ENCODE measurements at regions of chr1 and their contacts with region 1.

Region 1: GRCh38 chr1:205255941-205256780 is 28.4 kb downstream of the TMCC2 start:
- DNase-seq: peak; percentile 90 to 98 (median 95)
- H3K4me3 ChIP-seq: no peak overlapping the region
- H3K27ac ChIP-seq: peak overlapping the region in 2 of 5 donors; percentile 2 to 10
- H3K4me1 ChIP-seq: peaks cover 9 to 22% of the 10 kb centered on the region in 2 donors
- H3K27me3 ChIP-seq: no peaks in the 10 kb centered on the region
- CTCF ChIP-seq: peak; percentile 96 to 100 (median 99)
- POLR2A ChIP-seq: no peak

Region 2: DNA sequence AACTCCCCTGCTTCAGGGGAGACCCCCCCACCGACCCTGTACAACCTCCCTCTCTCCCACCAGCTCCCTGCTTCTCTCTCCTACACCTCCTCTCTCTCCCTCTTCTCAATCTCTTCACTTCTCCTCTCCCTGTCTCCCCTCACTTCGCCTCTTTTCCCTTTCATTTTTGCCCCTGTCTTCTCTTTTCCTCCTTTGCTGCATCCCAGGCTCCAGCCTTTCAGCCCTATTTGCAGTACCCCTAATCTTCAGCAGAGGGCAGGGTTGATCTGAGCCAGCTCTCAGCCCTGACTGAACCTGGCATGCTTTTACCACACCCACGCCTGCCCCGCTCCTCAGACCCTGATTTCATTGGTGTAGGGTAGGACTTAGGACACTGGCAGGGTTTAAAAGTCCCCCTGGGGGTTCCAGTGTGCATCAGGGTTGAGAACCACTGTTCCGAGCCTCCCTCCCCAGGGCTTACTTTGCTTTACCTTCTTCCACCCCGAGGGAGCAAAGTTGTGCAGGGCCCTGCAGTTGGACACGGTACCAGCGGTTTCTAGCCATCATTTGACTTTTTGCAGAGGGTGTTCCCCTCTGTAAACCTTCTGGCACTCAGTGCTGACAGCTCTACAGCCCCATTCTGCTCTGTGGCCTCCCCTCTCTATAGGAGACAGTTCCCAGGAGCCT is 280.5 kb before region 1 on chr1:
- intact Hi-C with region 1: loop called in 1 of 2 experiments (anchors 5 kb)
- DNase-seq: peak; percentile 37 to 76 (median 60)
- H3K4me3 ChIP-seq: no peak overlapping the region
- H3K27ac ChIP-seq: no peak overlapping the region
- H3K4me1 ChIP-seq: no peaks in the 10 kb centered on the region
- H3K27me3 ChIP-seq: no peaks in the 10 kb centered on the region
- CTCF ChIP-seq: peak; percentile 68 to 81 (median 78)
- POLR2A ChIP-seq: no peak

Region 3: DNA sequence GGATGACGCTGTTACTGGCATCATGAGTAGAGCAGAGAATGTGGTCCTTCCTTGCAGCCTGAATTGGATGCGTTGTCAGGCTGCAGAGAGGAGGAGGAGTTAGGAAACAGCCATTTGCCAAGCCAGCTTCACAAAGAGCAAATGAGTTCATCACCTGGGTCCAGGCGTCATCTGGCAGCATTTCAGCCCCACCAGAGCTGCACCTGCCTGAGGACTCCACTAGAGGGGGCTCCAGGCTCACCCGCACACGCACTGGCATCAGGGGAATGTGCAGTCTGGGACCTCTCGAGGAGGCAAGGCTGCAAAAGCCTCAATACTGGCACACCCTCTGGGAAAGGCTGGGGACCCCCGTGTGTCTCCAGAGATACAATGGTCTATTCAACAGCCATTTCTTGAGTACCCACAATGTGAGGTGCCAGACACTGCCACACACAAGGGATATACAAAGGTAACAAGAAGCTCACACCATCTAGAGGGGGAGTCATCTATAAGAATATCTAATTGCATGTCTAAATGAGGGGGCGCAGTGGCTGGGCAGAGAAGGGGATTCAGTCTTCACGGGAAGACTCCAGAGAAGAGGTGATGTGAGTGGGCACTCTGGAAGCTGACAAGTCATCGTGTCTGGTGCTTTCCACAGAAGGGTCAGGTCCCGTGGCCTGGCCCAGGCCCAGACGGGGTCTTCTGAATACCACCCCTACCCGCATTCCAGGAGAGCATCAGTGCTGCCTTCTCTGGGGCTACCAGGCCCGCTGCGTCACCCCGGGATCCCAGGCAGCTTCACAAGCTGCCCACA is 266.7 kb before region 1 on chr1:
- intact Hi-C with region 1: loop called in 1 of 2 experiments (anchors 10 kb)
- DNase-seq: peak; percentile 68 to 91 (median 76)
- H3K4me3 ChIP-seq: no peak overlapping the region
- H3K27ac ChIP-seq: no peak overlapping the region
- H3K4me1 ChIP-seq: no peaks in the 10 kb centered on the region
- H3K27me3 ChIP-seq: no peaks in the 10 kb centered on the region
- CTCF ChIP-seq: peak; percentile 87 to 98 (median 96)
- POLR2A ChIP-seq: no peak

Region 4: GRCh38 chr1:205124726-205125125 is 131.4 kb before region 1 on chr1:
- intact Hi-C with region 1: loop called in 1 of 2 experiments (anchors 5 kb)
- DNase-seq: no peak
- H3K4me3 ChIP-seq: no peak overlapping the region
- H3K27ac ChIP-seq: no peak overlapping the region
- H3K4me1 ChIP-seq: peaks cover 12 to 23% of the 10 kb centered on the region in 2 donors
- H3K27me3 ChIP-seq: no peaks in the 10 kb centered on the region
- CTCF ChIP-seq: no peak
- POLR2A ChIP-seq: no peak

Region 5: DNA sequence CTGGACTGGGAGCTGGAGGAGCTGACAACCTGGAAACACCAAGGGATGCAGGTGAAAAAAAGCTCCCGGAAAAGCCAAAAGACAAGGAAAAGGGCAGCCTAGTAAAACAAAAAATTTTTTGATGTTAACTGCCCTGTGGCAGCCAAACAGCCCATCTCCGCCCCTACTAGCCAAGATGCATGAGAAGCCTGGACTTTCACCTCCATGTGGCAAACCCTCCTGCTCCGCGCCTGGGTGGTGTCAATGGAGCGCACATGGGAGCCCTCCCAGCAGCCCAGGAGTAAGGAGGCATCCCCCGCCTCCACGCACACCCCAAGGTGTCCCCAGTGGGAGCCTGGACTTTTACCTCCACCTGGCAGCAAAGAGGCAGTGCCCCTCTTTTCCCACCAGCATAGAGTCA is 135.2 kb after region 1 on chr1:
- intact Hi-C with region 1: no loop called
- DNase-seq: no peak
- H3K4me3 ChIP-seq: no peak overlapping the region
- H3K27ac ChIP-seq: no peak overlapping the region
- H3K4me1 ChIP-seq: no peaks in the 10 kb centered on the region
- H3K27me3 ChIP-seq: no peaks in the 10 kb centered on the region
- CTCF ChIP-seq: no peak
- POLR2A ChIP-seq: no peak